Vagina (tissue), 2 donors: ENCODE measurements at regions of chr4 and their contacts with region 1.

Region 1: GRCh38 chr4:185504098-185505047 is 30.9 kb downstream of the PDLIM3 start:
- DNase-seq: no peak
- H3K4me3 ChIP-seq: peak overlapping the region; percentile 18 to 22
- H3K27ac ChIP-seq: peak overlapping the region; percentile 63
- H3K4me1 ChIP-seq: no peaks in the 10 kb centered on the region
- H3K27me3 ChIP-seq: no peaks in the 10 kb centered on the region
- CTCF ChIP-seq: no peak
- POLR2A ChIP-seq: no peak

Region 2: DNA sequence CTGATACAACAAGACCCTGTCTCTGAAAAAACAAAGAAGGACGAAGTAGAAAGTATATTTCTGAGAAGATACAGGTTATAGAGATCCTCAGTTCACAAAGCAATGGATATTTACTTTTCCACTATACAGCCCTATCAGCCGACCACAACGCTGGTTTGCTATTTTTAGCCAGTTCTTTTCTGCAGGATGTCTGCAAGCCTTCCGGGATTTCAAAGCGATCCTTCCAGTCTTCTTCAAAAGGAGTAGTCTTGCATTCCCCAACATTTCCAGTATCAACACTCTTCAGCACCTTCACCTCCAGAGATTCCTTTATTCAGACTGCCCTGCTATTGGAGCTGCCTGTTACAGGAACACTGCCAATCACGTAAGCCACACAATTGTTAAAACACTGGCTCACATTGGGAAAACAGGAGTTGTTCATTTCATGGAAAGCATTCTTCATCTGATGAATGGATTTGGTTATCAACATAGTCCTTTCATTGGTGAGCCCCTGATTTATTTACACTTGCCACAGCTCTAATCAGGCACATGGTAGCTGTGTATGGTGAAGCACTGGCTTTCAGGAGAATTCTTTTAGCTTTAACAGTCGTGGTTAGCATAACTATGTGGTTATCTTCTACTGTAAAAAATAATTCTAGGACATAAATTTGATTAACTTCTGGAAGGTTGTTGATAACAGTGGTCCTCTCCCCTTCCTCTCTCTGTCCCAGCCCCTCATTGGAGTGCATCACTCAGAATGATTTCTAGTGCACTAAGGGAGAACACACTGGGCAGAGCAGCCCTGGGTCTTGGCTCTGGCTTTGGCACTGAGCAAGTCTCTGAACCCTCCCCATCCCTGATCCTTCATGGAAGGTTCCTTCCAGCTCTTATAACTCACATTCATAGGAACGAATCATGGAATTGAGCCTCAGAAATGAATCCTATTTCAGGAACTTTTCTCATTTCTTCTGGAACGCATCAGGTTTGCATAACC is 417.5 kb after region 1 on chr4:
- intact Hi-C with region 1: loop called (anchors 5 kb)
- DNase-seq: no peak
- H3K4me3 ChIP-seq: no peak overlapping the region
- H3K27ac ChIP-seq: no peak overlapping the region
- H3K4me1 ChIP-seq: no peaks in the 10 kb centered on the region
- H3K27me3 ChIP-seq: no peaks in the 10 kb centered on the region
- CTCF ChIP-seq: no peak
- POLR2A ChIP-seq: no peak